ENCODE measurements at regions of chr6 and their contacts with region 1.

Region 1: DNA sequence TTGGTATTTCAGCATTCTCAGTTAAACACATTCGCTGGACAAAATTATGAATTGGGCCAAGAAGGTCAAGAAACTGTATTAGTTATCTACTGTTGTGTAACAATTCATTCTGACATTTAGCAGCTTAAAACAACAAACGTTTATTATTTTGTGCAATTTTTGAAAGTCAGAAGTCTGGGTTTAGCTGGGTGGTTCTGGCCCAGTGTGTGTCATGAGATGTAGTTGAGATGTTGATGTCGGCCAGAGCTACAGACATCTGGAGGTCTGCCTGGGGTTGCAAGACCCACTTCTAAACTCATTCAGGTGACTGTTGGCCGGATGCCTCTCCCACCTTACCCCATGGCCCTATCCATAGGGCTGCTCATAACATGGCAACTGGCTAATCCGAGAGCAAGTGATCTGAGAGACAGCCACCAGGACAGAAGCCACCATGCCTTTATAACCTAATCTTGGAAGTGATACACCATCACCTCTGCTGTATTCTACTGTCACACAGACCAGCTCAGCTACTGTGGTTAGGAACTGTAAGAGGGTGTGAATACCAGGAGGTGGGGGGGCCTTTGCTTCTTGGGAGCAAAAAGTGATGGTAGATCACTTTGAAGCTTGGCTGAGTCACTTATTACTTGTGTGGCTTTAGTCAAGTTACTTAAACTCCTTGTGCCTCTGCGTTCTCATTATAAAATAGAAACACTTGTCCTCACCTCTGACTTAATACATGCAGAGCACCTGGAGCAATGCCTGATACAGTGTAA is 217.0 kb upstream of the MYLIP start:
- DNase-seq: peak; percentile 67
- H3K4me3 Mint-ChIP-seq: no peak overlapping the region
- H3K27ac Mint-ChIP-seq: no peak overlapping the region
- H3K4me1 Mint-ChIP-seq: peaks cover 32% of the 10 kb centered on the region
- H3K27me3 Mint-ChIP-seq: no peaks in the 10 kb centered on the region

Region 2: GRCh38 chr6:15715060-15715459 is 196.9 kb before region 1 on chr6:
- CTCF ChIA-PET with region 1: no interaction called
- POLR2A ChIA-PET with region 1: no interaction called
- intact Hi-C with region 1: loop called (anchors 1 kb)
- DNase-seq: peak; percentile 70
- H3K4me3 Mint-ChIP-seq: no peak overlapping the region
- H3K27ac Mint-ChIP-seq: peak overlapping the region; percentile 54
- H3K4me1 Mint-ChIP-seq: peaks cover 21% of the 10 kb centered on the region
- H3K27me3 Mint-ChIP-seq: peaks cover 14% of the 10 kb centered on the region

Region 3: DNA sequence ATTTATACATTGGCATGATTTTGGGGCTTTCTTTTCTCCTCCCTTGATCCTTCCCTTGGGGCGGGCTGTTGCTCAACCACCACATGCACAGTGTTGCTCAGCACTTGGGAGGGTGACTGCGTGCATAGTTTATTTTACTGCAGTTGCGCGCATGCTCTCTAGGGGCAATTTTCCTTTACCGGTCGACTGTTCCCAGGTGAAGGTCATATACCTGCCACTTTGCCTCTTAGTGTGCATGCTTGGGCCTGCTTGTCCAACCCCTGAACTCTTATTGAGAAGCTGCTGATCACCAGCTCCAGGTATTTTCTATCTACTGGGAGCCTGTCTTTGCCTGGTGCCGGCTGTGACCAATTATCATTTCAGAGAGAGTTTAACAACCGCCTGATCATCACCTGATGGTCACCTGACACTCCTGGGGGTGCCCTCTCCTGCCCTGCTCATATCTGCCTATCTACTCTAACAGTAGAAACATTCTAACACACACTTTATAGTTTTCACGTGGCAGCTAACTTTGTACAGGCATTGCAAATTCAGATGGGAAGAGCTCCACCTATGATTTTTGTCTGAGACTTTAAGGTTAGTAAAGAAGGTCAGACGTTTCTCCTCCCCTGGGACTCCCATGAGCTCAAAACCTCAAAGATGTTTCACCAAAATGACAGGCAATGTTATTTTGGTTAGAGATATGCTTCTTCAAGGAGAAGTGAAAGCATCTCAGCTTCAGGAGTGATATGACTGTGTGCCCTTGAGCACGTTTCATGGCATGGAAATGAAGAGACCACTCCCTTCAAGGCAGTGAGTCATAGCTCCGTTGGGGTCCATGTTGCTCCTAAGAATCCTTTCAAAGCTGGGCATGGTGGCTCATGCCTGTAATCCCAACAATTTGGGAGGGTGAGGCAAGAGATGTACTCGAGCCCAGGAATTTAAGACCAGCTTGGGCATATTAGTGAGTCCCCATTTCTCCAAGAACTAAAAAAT is 10.5 kb before region 1 on chr6:
- CTCF ChIA-PET with region 1: interaction called, 8 read pairs
- POLR2A ChIA-PET with region 1: interaction called, 10 read pairs
- intact Hi-C with region 1: loop called (anchors 1 kb)
- DNase-seq: peak; percentile 57
- H3K4me3 Mint-ChIP-seq: no peak overlapping the region
- H3K27ac Mint-ChIP-seq: peak overlapping the region; percentile 60
- H3K4me1 Mint-ChIP-seq: peaks cover 25% of the 10 kb centered on the region
- H3K27me3 Mint-ChIP-seq: peaks cover 9% of the 10 kb centered on the region

Region 4: DNA sequence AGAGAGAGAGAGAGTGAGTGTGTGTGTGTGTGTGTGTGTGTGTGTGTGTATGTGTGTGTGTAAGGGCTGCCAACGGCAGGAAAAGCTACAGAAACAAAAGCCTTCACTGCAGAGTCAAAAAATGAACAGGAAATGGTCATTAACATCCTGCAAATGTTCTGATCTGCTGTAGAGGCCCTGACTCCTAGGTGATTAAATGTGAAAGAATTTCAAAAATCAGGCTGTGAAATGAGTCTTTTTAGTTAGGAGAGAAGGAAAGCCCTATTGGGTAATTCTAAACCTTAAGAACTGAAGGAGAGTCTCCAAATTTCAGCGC is 50.5 kb after region 1 on chr6:
- CTCF ChIA-PET with region 1: no interaction called
- POLR2A ChIA-PET with region 1: no interaction called
- intact Hi-C with region 1: loop called (anchors 1 kb)
- DNase-seq: peak; percentile 34
- H3K4me3 Mint-ChIP-seq: no peak overlapping the region
- H3K27ac Mint-ChIP-seq: peak overlapping the region; percentile 7
- H3K4me1 Mint-ChIP-seq: peaks cover 14% of the 10 kb centered on the region
- H3K27me3 Mint-ChIP-seq: no peaks in the 10 kb centered on the region

Region 5: GRCh38 chr6:16004934-16005679 is 93.2 kb after region 1 on chr6:
- CTCF ChIA-PET with region 1: no interaction called
- POLR2A ChIA-PET with region 1: no interaction called
- intact Hi-C with region 1: no loop called
- DNase-seq: no peak
- H3K4me3 Mint-ChIP-seq: no peak overlapping the region
- H3K27ac Mint-ChIP-seq: no peak overlapping the region
- H3K4me1 Mint-ChIP-seq: no peaks in the 10 kb centered on the region
- H3K27me3 Mint-ChIP-seq: peaks cover 11% of the 10 kb centered on the region

Region 6: DNA sequence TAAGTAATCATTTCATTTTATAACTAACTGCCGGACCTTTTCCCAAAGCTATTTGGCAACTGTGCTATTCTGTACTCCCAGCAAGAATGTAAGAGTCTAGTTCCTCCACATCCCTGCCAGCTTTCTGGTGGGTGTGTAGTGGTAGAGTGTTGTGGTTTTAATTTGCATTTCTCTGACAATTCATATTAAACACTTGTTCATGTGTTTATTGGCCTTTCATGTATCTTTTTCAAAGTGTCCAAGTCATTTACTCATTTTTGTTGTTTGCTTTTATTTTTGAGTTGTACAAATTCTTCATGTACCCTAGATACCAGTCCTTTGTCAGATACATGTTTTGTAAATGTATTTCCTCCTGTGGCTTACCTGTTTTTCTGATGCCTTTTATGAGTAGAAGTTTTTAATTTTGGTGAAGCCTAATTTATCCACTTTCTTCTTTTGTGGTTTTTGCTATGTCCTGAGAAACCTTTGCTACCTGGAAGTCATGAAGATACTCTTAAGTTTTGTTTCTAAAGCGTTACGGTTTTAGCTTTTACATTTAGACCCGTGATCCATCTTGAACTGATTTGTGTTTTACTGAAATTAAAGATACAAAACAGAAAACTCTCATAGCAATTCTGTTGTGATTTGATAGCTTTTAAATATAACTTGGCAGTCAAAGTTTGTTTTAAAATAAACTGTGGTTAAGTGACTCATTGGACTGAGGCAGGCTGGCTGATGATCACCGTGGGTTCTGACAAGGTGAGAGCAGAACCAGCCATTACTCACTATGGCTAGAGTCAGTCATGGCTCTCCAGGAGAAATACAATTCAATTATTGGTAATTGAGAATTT is 224.9 kb after region 1 on chr6:
- CTCF ChIA-PET with region 1: interaction called, 4 read pairs
- POLR2A ChIA-PET with region 1: interaction called, 3 read pairs
- intact Hi-C with region 1: loop called (anchors 1 kb)
- DNase-seq: peak; percentile 75
- H3K4me3 Mint-ChIP-seq: peak overlapping the region; percentile 46
- H3K27ac Mint-ChIP-seq: peak overlapping the region; percentile 86
- H3K4me1 Mint-ChIP-seq: peaks cover 76% of the 10 kb centered on the region
- H3K27me3 Mint-ChIP-seq: no peaks in the 10 kb centered on the region